K562 (cell line): ENCODE measurements at regions of chr5 and their contacts with region 1.

Region 1: DNA sequence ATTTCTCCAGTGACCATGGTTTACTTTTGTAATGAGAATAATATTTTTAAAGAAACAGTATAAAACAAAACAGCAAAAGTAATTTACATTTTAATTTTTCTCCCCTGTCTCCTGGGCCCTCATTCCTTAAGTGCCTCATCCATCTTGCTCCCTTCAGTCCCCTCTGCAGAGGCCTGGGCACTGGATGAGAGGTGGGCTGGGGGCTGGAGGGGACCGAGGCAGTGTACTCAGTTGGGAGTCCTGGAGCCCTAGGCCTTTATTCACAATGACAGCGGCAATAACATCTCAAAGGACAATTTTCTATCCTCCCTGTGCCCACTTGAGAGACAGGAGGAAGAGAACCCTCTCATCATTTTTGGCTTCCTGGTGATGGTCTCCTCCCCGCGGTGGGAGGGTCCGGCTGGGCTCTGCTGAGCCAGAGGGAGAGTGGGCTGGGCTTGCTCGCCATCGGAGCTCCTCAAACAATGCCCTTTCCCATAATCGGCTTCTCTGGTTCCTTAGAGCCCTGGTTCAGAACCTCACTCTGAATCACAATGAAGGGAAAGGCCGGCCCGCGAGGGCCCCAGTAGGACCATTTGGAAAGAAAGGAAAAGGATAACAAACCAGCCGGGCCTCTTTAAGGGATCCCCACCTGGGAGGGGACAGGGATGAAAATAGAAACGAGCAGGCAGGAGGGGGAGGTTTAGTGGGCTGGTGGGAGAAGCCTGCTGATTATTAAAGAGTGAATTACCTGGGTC is 9.7 kb upstream of the SMIM32 start:
- DNase-seq: no peak
- ATAC-seq: no peak
- H3K4me3 ChIP-seq: no peak overlapping the region
- H3K27ac ChIP-seq: no peak overlapping the region
- H3K4me1 ChIP-seq: no peaks in the 10 kb centered on the region; a peak in 1 of 5 replicates
- H3K27me3 ChIP-seq: peaks cover 2 to 52% of the 10 kb centered on the region in 2 experiments; a peak in 4 of 5 replicates
- CTCF ChIP-seq: no peak
- EP300 ChIP-seq: no peak
- POLR2A ChIP-seq: no peak
- RAD21 ChIP-seq: no peak

Region 2: GRCh38 chr5:135660826-135661575 is 541.6 kb before region 1 on chr5:
- CTCF ChIA-PET with region 1: no interaction called
- POLR2A ChIA-PET with region 1: no interaction called
- in situ Hi-C with region 1: no loop called
- intact Hi-C with region 1: no loop called
- DNase-seq: no peak
- ATAC-seq: no peak
- H3K4me3 ChIP-seq: no peak overlapping the region
- H3K27ac ChIP-seq: no peak overlapping the region
- H3K4me1 ChIP-seq: no peaks in the 10 kb centered on the region
- H3K27me3 ChIP-seq: no peaks in the 10 kb centered on the region
- CTCF ChIP-seq: no peak
- EP300 ChIP-seq: no peak
- POLR2A ChIP-seq: no peak
- RAD21 ChIP-seq: no peak

Region 3: DNA sequence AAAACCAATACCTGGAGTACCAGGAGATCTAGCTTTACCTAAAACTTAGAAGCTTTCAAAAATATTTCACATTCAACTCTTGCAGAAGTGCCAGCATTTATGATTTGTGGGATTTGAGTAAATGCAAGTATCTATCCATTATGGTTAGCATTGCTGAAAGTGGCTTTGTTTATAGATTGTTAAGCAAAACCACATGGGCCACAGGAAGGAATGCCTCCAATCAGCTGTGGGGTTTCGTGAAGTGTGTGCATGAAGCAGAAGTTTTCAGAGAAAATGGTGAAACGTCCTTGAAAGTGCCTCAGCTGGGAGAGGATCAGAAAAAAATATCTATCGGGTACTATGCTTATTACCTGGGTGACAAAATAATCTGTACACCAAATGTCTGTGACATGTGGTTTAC is 252.0 kb before region 1 on chr5:
- CTCF ChIA-PET with region 1: no interaction called
- POLR2A ChIA-PET with region 1: no interaction called
- in situ Hi-C with region 1: loop called (anchors 10 kb)
- intact Hi-C with region 1: no loop called
- DNase-seq: no peak
- ATAC-seq: no peak
- H3K4me3 ChIP-seq: no peak overlapping the region
- H3K27ac ChIP-seq: no peak overlapping the region
- H3K4me1 ChIP-seq: no peaks in the 10 kb centered on the region
- H3K27me3 ChIP-seq: no peaks in the 10 kb centered on the region
- CTCF ChIP-seq: no peak
- EP300 ChIP-seq: no peak
- POLR2A ChIP-seq: no peak
- RAD21 ChIP-seq: no peak

Region 4: GRCh38 chr5:136141561-136141960 is 61.1 kb before region 1 on chr5:
- CTCF ChIA-PET with region 1: no interaction called
- POLR2A ChIA-PET with region 1: no interaction called
- in situ Hi-C with region 1: no loop called
- intact Hi-C with region 1: no loop called
- DNase-seq: no peak
- ATAC-seq: no peak
- H3K4me3 ChIP-seq: no peak overlapping the region
- H3K27ac ChIP-seq: no peak overlapping the region
- H3K4me1 ChIP-seq: peaks cover 0 to 3% of the 10 kb centered on the region in 2 experiments; a peak in 1 of 5 replicates
- H3K27me3 ChIP-seq: no peaks in the 10 kb centered on the region
- CTCF ChIP-seq: no peak
- EP300 ChIP-seq: no peak
- POLR2A ChIP-seq: no peak
- RAD21 ChIP-seq: no peak